ENCODE measurements at regions of chr10 and their contacts with region 1.

Region 1: GRCh38 chr10:541750-542371 is 147.6 kb downstream of the DIP2C start:
- DNase-seq: peak; percentile 93
- H3K4me3 ChIP-seq: peak overlapping the region; percentile 29
- H3K27ac ChIP-seq: peak overlapping the region; percentile 16
- H3K4me1 ChIP-seq: peaks cover 55% of the 10 kb centered on the region
- CTCF ChIP-seq: no peak

Region 2: DNA sequence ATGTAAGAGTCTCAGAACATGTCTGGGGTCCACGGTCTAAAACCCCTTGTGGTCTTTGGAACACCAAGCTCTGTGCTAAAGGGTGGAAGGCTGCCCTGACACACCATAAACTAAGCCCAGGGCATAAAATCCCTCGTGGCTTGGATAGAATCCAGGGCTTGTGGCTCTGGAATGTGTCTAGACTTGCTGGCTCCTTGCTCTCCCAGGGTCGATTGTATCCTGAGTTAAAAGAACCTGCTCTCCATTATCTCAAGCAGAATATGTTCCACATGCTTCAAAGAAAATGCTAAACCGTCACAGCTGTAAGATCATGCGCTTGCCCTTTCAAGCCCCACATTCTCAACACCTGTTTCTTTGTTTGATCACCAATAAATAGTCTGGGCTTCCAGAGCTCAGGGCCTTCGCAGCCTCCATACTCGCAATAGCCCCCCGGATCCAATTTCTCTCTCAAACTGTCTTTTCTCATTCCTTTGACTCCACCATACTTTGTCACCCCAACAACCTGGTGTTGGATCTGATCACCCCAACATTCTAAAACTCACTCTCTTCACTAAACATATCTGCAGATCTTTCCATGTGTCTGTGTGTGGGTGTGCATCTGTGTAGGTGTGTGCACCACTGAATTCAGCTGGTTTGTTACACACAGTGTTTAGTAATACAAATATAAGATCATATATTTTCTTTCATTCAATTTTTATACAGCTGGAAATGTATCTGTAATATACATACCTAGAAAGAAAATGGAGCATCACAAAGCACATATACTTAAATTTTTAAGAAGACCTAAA is 168.1 kb before region 1 on chr10:
- CTCF ChIA-PET with region 1: no interaction called
- POLR2A ChIA-PET with region 1: no interaction called
- intact Hi-C with region 1: no loop called
- DNase-seq: no peak
- H3K4me3 ChIP-seq: no peak overlapping the region
- H3K27ac ChIP-seq: no peak overlapping the region
- H3K4me1 ChIP-seq: peaks cover 4% of the 10 kb centered on the region
- CTCF ChIP-seq: no peak

Region 3: GRCh38 chr10:397321-398075 is 144.4 kb before region 1 on chr10:
- CTCF ChIA-PET with region 1: no interaction called
- POLR2A ChIA-PET with region 1: no interaction called
- intact Hi-C with region 1: loop called (anchors 10 kb)
- DNase-seq: no peak
- H3K4me3 ChIP-seq: no peak overlapping the region
- H3K27ac ChIP-seq: no peak overlapping the region
- H3K4me1 ChIP-seq: peaks cover 14% of the 10 kb centered on the region
- CTCF ChIP-seq: no peak

Region 4: GRCh38 chr10:561721-562120 is 19.9 kb after region 1 on chr10:
- CTCF ChIA-PET with region 1: interaction called, 3 read pairs
- POLR2A ChIA-PET with region 1: interaction called, 5 read pairs
- intact Hi-C with region 1: loop called (anchors 2 kb)
- DNase-seq: peak; percentile 63
- H3K4me3 ChIP-seq: no peak overlapping the region
- H3K27ac ChIP-seq: peak overlapping the region; percentile 53
- H3K4me1 ChIP-seq: peaks cover 40% of the 10 kb centered on the region
- CTCF ChIP-seq: no peak

Region 5: GRCh38 chr10:677038-677437 is 135.2 kb after region 1 on chr10:
- CTCF ChIA-PET with region 1: no interaction called
- POLR2A ChIA-PET with region 1: no interaction called
- intact Hi-C with region 1: no loop called
- DNase-seq: no peak
- H3K4me3 ChIP-seq: no peak overlapping the region
- H3K27ac ChIP-seq: no peak overlapping the region
- H3K4me1 ChIP-seq: no peaks in the 10 kb centered on the region
- CTCF ChIP-seq: no peak